ENCODE measurements at regions of chr11 and their contacts with region 1.

Region 1: GRCh38 chr11:18634140-18635032 is at the start of gene SPTY2D1:
- DNase-seq: peak; percentile 96 to 99
- ATAC-seq: peak; percentile 98 to 99
- H3K4me3 ChIP-seq: peak within 1 kb of the TSS; percentile 74
- H3K27ac ChIP-seq: peak within 1 kb of the TSS; percentile 85 to 92
- H3K4me1 ChIP-seq: peaks cover 11% of the 10 kb centered on the region
- CTCF ChIP-seq: no peak
- EP300 ChIP-seq: peak in 1 of 2 experiments; percentile 11; a peak in 1 of 5 replicates
- POLR2A ChIP-seq: peak; percentile 68
- RAD21 ChIP-seq: no peak
- polyA plus RNA-seq, gene SPTY2D1: 16.2 and 24.6 TPM in 2 replicates

Region 2: GRCh38 chr11:18563090-18563730 is 71.2 kb before region 1 on chr11:
- CTCF ChIA-PET with region 1: no interaction called
- POLR2A ChIA-PET with region 1: no interaction called
- DNase-seq: no peak
- ATAC-seq: no peak
- H3K4me3 ChIP-seq: no peak overlapping the region
- H3K27ac ChIP-seq: no peak overlapping the region
- H3K4me1 ChIP-seq: no peaks in the 10 kb centered on the region
- CTCF ChIP-seq: no peak
- EP300 ChIP-seq: no peak
- POLR2A ChIP-seq: no peak
- RAD21 ChIP-seq: no peak

Region 3: DNA sequence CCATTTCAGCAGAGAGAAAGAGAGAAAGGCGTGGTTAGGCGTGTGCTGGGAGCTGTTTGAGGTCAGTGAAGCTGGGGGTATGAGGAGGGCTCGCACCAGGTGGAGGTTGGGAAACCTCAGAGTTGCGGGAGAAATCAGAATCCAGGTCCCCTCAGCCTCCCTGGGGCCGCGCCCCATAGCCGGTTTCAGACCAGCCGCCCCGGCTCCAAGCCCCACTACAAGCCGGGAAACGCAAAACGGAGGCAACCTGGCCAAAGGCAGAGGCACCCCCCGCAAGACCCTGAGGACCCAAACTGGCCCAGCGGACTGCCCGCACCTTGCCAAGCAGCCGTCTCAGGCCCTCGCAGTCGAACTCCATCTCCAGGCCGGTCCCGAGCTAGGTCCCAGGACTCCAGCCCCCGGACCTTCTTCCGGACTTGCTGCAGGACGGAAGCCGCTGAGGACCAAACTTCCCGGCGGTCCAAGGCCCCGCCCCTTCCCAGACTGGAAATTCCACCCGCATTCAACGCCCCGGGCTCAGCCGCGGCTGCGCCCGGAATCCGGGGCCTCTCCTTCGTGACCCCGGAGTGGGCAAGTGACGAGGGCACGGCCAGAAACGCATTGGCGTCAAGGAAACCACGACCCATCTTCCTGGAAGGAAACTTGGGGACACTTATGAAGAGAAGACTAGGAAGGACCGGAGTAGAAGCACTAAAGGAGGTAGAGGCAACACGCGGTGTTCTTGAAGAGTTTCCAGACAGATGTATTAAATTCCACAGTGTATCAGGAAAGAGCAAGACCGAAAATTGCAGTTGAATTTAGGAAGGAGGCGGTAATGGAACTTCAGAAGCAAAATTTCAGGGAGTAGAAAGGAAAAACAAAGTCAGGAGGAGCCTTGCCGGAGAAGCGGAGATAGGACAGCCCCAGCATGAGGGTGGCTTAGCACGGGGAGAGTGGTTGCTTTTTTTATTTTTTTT is 45.8 kb before region 1 on chr11 and contains the start of gene UEVLD:
- CTCF ChIA-PET with region 1: no interaction called
- POLR2A ChIA-PET with region 1: interaction called, 13 read pairs
- DNase-seq: peak; percentile 93 to 97
- ATAC-seq: peak; percentile 96
- H3K4me3 ChIP-seq: peak within 1 kb of the TSS; percentile 63
- H3K27ac ChIP-seq: peak within 1 kb of the TSS; percentile 88 to 96
- H3K4me1 ChIP-seq: peaks cover 25% of the 10 kb centered on the region; the same call in 1 of the 3 replicates
- CTCF ChIP-seq: no peak
- EP300 ChIP-seq: no peak
- POLR2A ChIP-seq: peak; percentile 84
- RAD21 ChIP-seq: no peak
- polyA plus RNA-seq, gene UEVLD: 36.7 and 41.2 TPM in 2 replicates

Region 4: GRCh38 chr11:18836417-18836816 is 202.0 kb after region 1 on chr11:
- CTCF ChIA-PET with region 1: no interaction called
- POLR2A ChIA-PET with region 1: no interaction called
- DNase-seq: no peak
- ATAC-seq: peak in 1 of 2 experiments; percentile 54; a peak in 1 of 6 replicates
- H3K4me3 ChIP-seq: no peak overlapping the region
- H3K27ac ChIP-seq: no peak overlapping the region
- H3K4me1 ChIP-seq: no peaks in the 10 kb centered on the region
- CTCF ChIP-seq: no peak
- EP300 ChIP-seq: no peak
- POLR2A ChIP-seq: no peak
- RAD21 ChIP-seq: no peak